WTC11 (cell line): ENCODE measurements at regions of chr12 and their contacts with region 1.

Region 1: GRCh38 chr12:109844983-109845823 is 12.0 kb upstream of the TRPV4 start:
- DNase-seq: peak; percentile 94
- ATAC-seq: peak; percentile 93
- H3K4me3 Mint-ChIP-seq: no peak overlapping the region
- H3K27ac Mint-ChIP-seq: no peak overlapping the region
- H3K4me1 Mint-ChIP-seq: peaks cover 11% of the 10 kb centered on the region
- H3K27me3 Mint-ChIP-seq: no peaks in the 10 kb centered on the region; the same call in 1 of the 2 replicates
- CTCF ChIP-seq: peak; percentile 96

Region 2: DNA sequence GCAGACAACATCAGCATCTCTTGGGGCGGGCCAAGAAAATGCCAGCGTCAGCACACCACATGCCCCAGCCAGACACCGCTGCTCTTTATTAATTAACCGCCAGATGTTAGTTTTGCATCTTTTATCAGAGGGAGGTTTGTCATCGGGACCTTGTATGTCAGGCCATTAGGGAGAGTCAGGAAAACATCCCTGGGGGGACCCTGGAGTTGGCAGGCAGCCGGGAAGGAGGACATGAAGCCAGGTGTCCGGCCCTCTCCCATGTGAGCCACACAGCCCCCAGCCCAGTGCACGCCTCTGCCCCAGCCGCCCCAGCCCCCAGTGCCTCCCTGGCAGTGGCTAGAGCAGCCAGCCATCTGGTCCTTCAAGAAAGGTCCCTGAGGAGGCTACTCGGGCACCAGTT is 188.5 kb before region 1 on chr12:
- CTCF ChIA-PET with region 1: no interaction called
- POLR2A ChIA-PET with region 1: no interaction called
- DNase-seq: no peak
- ATAC-seq: no peak
- H3K4me3 Mint-ChIP-seq: no peak overlapping the region
- H3K27ac Mint-ChIP-seq: no peak overlapping the region
- H3K4me1 Mint-ChIP-seq: peaks cover 15% of the 10 kb centered on the region
- H3K27me3 Mint-ChIP-seq: peaks cover 3% of the 10 kb centered on the region
- CTCF ChIP-seq: no peak

Region 3: DNA sequence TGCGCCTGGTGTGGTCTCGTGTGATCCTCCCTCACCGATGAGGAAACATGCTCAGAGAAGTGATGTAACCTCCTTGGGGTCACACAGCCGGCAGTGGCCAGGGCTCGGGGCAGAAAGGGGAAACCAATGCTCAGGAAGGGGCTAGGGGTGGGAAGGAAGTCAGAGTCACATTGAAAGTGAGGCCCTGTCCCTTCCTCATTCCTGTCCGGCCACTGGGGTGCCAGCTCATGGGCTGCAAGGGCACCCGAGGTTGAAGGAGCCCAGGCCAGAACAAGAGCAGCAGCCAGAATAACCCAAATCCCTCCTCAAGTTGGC is 17.0 kb before region 1 on chr12:
- CTCF ChIA-PET with region 1: interaction called, 63 read pairs
- POLR2A ChIA-PET with region 1: no interaction called
- DNase-seq: no peak
- ATAC-seq: no peak
- H3K4me3 Mint-ChIP-seq: no peak overlapping the region
- H3K27ac Mint-ChIP-seq: no peak overlapping the region
- H3K4me1 Mint-ChIP-seq: peaks cover 3% of the 10 kb centered on the region; the same call in 1 of the 2 replicates
- H3K27me3 Mint-ChIP-seq: peaks cover 4% of the 10 kb centered on the region
- CTCF ChIP-seq: no peak

Region 4: DNA sequence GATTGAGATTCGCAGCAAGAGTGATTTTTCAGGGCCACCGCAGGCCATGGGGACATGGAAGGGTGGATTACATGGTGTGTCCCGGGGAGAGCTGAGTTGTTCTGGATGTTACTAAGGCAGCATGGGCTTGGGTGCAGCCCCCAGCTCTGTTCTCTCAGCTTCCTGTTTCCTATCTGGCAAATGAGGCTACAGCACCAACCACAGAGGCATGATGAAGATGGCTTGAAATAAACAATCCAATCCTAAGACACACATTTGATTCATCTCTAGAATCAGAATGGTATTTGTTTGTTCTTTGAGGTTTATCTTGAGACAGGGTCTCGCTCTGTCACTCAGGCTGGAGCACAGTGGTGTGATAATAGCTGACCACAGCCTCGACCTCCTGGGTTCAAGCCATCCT is 13.6 kb after region 1 on chr12:
- CTCF ChIA-PET with region 1: interaction called, 18 read pairs
- POLR2A ChIA-PET with region 1: interaction called, 6 read pairs
- DNase-seq: no peak
- ATAC-seq: no peak
- H3K4me3 Mint-ChIP-seq: no peak overlapping the region
- H3K27ac Mint-ChIP-seq: no peak overlapping the region
- H3K4me1 Mint-ChIP-seq: peaks cover under 1% of the 10 kb centered on the region; the same call in 1 of the 2 replicates
- H3K27me3 Mint-ChIP-seq: no peaks in the 10 kb centered on the region
- CTCF ChIP-seq: no peak

Region 5: DNA sequence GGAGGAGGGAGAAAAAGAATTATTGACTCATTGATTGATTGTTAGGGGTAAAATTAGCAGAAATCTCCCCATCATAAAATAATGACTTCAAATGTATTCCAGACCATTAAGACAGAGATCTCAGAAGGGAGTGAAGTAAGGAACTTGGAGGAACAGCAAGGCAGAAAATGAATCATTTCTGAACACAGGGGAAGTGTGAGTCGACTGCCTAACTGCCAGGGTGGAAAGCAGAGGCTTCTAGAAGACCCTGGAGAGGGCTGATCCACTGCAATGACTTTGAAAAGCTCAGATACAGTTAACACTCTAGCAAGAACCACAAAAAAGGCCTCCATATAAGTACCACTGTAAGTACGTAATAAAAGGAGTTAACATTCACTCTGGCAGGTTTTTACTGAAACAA is 25.4 kb after region 1 on chr12:
- CTCF ChIA-PET with region 1: interaction called, 11 read pairs
- POLR2A ChIA-PET with region 1: interaction called, 8 read pairs
- DNase-seq: no peak
- ATAC-seq: no peak
- H3K4me3 Mint-ChIP-seq: no peak overlapping the region
- H3K27ac Mint-ChIP-seq: no peak overlapping the region
- H3K4me1 Mint-ChIP-seq: peaks cover 17% of the 10 kb centered on the region
- H3K27me3 Mint-ChIP-seq: no peaks in the 10 kb centered on the region
- CTCF ChIP-seq: no peak

Region 6: DNA sequence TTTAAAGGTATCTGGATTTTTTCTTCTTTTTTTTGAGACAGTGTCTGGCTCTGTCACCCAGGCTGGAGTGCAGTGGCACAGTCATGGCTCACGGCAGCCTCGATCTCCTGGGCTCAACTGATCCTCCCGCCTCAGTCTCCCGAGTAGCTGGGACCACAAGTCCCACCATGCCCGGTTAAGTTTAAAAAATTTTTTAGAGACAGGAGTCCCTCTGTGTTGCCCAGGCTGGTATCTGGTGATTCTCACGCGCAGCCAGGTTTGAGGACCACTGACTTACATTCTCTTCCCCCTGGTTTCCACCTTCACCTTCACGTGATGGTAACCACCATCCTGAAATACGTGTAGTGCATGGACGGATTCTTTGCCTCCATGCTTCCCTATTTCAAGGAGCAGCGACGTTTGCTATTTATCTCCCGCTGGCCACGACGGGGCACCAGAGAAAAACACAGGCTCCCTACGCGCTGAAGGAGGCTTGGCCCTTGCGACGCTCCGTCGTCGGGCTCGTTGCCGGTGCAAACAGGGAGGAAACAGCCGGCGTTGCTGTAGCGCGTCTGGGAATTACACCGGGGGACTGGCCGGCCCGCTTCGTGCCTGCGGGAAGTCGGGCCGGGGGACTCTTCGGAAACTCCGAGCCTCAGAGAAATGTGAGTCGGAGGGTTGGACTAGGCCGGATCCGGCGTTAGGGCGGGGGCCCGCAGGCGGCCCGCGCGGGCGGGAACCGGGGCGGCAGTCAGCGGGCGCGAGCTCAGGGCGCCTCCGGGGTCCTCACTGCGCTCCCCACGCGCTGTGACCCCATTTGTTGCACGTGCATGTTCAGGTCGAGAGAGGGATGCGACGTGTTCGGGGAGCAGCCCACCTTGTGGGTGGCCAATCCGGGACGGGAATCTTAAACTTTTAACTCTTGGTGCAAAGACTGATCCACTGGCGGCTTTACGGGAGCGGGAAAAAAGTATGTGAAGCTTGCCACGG is 54.9 kb after region 1 on chr12 and contains the start of gene TCHP:
- CTCF ChIA-PET with region 1: interaction called, 13 read pairs
- POLR2A ChIA-PET with region 1: no interaction called
- DNase-seq: peak; percentile 74
- ATAC-seq: peak; percentile 49
- H3K4me3 Mint-ChIP-seq: peak within 1 kb of the TSS; percentile 85
- H3K27ac Mint-ChIP-seq: peak within 1 kb of the TSS; percentile 81
- H3K4me1 Mint-ChIP-seq: peaks cover 24% of the 10 kb centered on the region
- H3K27me3 Mint-ChIP-seq: peaks cover 99% of the 10 kb centered on the region
- CTCF ChIP-seq: no peak
- total RNA-seq, gene TCHP: 7.9 to 10.1 TPM (median 10.0 TPM) in 3 replicates

Region 7: DNA sequence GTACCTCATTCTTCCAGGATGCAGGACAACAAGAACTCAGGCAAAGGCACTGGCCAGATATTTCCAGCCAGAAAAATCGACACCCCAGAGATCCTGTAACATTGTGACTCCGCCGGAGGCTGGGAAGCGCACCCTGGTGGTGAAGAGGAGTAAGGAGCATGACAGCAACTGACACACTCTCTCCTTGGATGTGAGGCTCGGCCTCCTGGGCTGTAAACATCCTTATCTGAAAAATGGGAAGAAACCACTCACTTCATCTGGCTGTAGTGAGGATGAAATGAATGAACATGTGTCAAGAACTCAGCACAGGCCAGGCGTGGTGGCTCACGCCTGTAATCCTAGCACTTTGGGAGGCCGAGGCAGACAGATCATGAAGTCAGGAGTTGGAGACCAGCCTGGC is 82.4 kb after region 1 on chr12:
- CTCF ChIA-PET with region 1: interaction called, 14 read pairs
- POLR2A ChIA-PET with region 1: no interaction called
- DNase-seq: peak; percentile 59
- ATAC-seq: peak; percentile 81
- H3K4me3 Mint-ChIP-seq: no peak overlapping the region
- H3K27ac Mint-ChIP-seq: no peak overlapping the region
- H3K4me1 Mint-ChIP-seq: peaks cover 7% of the 10 kb centered on the region; the same call in 1 of the 2 replicates
- H3K27me3 Mint-ChIP-seq: no peaks in the 10 kb centered on the region
- CTCF ChIP-seq: peak; percentile 66